GM12878 (cell line): ENCODE measurements at regions of chr1 and their contacts with region 1.

Region 1: GRCh38 chr1:165080253-165080896 is 276.1 kb downstream of the LMX1A start:
- DNase-seq: no peak
- ATAC-seq: no peak
- H3K4me3 ChIP-seq: no peak overlapping the region
- H3K27ac ChIP-seq: no peak overlapping the region
- H3K4me1 ChIP-seq: no peaks in the 10 kb centered on the region
- H3K27me3 ChIP-seq: no peaks in the 10 kb centered on the region
- CTCF ChIP-seq: no peak
- EP300 ChIP-seq: no peak
- POLR2A ChIP-seq: no peak
- RAD21 ChIP-seq: no peak

Region 2: GRCh38 chr1:163875200-163875926 is 1205.0 kb before region 1 on chr1:
- CTCF ChIA-PET with region 1: no interaction called
- POLR2A ChIA-PET with region 1: no interaction called
- RAD21 ChIA-PET with region 1: no interaction called
- SMC1A ChIA-PET with region 1: no interaction called
- in situ Hi-C with region 1: no loop called
- intact Hi-C with region 1: loop called (anchors 10 kb)
- DNase-seq: no peak
- ATAC-seq: no peak
- H3K4me3 ChIP-seq: no peak overlapping the region
- H3K27ac ChIP-seq: no peak overlapping the region
- H3K4me1 ChIP-seq: no peaks in the 10 kb centered on the region
- H3K27me3 ChIP-seq: no peaks in the 10 kb centered on the region
- CTCF ChIP-seq: no peak
- EP300 ChIP-seq: no peak
- POLR2A ChIP-seq: no peak
- RAD21 ChIP-seq: no peak

Region 3: DNA sequence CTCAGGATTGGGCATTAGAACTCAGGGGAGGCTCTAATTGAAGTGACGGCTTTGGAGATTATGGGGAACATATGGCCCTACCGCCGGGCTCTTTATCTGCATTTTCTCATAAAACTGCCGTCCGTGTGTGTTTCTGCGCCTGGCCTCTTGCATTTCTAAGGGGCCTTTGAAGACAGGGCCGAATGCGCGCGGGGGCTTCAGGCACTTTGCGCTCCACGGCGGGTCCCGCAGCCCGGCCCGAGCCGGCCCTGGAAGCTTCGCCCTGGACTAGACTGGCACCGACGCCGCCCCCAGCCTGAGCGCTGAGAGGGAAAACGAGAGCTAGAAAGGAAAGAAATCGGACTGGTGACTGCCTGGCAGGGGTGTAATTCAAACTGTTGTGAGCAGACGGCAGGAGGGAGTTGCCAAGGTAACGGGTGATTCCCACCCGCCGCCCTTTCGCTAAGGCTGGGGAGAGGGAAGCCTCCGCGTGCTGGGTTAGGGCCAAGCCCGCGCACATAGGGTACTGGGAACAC is 155.5 kb after region 1 on chr1:
- CTCF ChIA-PET with region 1: no interaction called
- POLR2A ChIA-PET with region 1: no interaction called
- RAD21 ChIA-PET with region 1: no interaction called
- SMC1A ChIA-PET with region 1: no interaction called
- in situ Hi-C with region 1: no loop called
- intact Hi-C with region 1: no loop called
- DNase-seq: no peak
- ATAC-seq: no peak
- H3K4me3 ChIP-seq: no peak overlapping the region
- H3K27ac ChIP-seq: no peak overlapping the region
- H3K4me1 ChIP-seq: no peaks in the 10 kb centered on the region
- H3K27me3 ChIP-seq: peaks cover 2 to 4% of the 10 kb centered on the region in 2 experiments
- CTCF ChIP-seq: no peak
- EP300 ChIP-seq: no peak
- POLR2A ChIP-seq: no peak
- RAD21 ChIP-seq: no peak